Ovary (tissue), 10 donors: ENCODE measurements at regions of chr6 and their contacts with region 1.

Region 1: GRCh38 chr6:108782179-108783041 is 65.8 kb upstream of the ARMC2 start:
- DNase-seq: peak; percentile 83 to 88 (median 86)
- H3K4me3 ChIP-seq: peak overlapping the region; percentile 28
- H3K27ac ChIP-seq: no peak overlapping the region
- H3K4me1 ChIP-seq: no peaks in the 10 kb centered on the region
- H3K27me3 ChIP-seq: no peaks in the 10 kb centered on the region
- CTCF ChIP-seq: peak; percentile 23 to 73 (median 71)
- EP300 ChIP-seq: no peak
- POLR2A ChIP-seq: no peak

Region 2: DNA sequence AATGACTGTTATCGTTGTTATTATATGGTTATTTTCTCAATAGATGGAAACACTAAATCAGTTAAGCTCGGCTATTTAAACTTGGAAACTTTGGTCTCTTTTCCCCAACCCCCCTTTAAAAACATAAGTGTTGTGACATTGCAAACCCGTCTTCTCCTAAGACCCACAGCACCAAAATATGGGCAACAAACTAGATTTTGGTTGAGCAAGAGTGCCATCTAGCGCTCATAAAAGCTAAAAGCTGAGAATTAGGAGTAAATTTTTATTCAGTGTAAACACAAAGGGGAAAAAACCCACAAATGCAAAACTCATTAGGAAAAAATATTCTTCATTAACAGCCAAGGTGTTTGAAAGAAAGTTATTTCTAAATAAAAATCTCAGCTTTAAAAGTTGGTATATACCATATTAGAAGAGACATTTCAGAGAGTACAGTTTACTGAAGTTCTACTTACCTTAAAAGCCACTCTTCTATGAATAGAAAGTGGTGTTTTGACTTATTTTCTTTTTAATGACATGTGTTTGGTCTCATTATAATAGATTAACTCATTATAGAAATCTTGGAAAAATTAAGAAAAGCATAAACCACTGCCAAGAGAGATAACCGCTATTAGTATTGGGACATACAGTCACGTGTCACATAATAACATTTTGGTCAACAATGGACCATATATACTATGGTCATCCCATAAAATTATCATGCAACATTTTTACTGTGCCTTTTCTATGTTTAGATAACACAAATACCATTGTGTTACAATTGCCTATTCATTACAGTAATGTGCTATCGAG is 291.1 kb after region 1 on chr6:
- intact Hi-C with region 1: loop called in 1 of 4 experiments (anchors 5 kb)
- DNase-seq: peak in 1 of 5 donors; percentile 48
- H3K4me3 ChIP-seq: no peak overlapping the region
- H3K27ac ChIP-seq: no peak overlapping the region
- H3K4me1 ChIP-seq: no peaks in the 10 kb centered on the region
- H3K27me3 ChIP-seq: no peaks in the 10 kb centered on the region
- CTCF ChIP-seq: peak; percentile 42 to 69 (median 64)
- EP300 ChIP-seq: no peak
- POLR2A ChIP-seq: no peak